IMR-90 (cell line): ENCODE measurements at regions of chr2 and their contacts with region 1.

Region 1: GRCh38 chr2:196584903-196585302 is 54.6 kb upstream of the CCDC150 start:
- DNase-seq: no peak
- ATAC-seq: no peak
- H3K4me3 ChIP-seq: no peak overlapping the region
- H3K27ac ChIP-seq: no peak overlapping the region
- H3K4me1 ChIP-seq: no peaks in the 10 kb centered on the region
- H3K27me3 ChIP-seq: no peaks in the 10 kb centered on the region
- CTCF ChIP-seq: no peak
- POLR2A ChIP-seq: no peak
- RAD21 ChIP-seq: no peak

Region 2: GRCh38 chr2:197813093-197813787 is 1228.3 kb after region 1 on chr2:
- CTCF ChIA-PET with region 1: no interaction called
- POLR2A ChIA-PET with region 1: no interaction called
- dilution Hi-C with region 1: no loop called
- in situ Hi-C with region 1: no loop called
- intact Hi-C with region 1: loop called (anchors 5 kb)
- DNase-seq: peak; percentile 52
- ATAC-seq: peak; percentile 69
- H3K4me3 ChIP-seq: no peak overlapping the region
- H3K27ac ChIP-seq: no peak overlapping the region
- H3K4me1 ChIP-seq: no peaks in the 10 kb centered on the region
- H3K27me3 ChIP-seq: peaks cover 3% of the 10 kb centered on the region
- CTCF ChIP-seq: peak; percentile 58
- POLR2A ChIP-seq: no peak
- RAD21 ChIP-seq: peak; percentile 30; the same call in 1 of the 2 replicates